Activated B cell treated with CpG ODN at 0.5 μM for 24 hours (primary cell): ENCODE measurements at regions of chr9 and their contacts with region 1.

Region 1: DNA sequence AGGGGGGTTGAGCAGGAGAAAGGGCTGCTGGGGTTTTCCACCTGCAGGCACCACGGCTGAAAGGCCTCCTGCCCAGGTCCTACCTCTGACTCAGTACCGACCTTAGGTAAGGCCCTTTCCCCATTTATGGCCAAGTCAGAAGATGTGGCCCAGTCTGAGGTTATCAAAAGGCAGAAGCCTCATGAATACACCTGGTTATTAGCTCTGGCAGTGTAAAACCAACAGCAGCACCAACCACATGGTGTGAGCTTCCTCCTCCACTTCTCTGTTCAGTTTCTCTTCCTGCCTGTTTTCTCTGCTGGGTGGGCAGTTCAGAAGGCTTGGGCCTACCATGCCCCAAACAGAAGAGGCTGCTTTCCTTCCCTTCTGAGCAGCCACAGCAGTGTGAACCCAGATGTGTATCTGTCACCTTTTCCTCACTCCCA is 86.9 kb downstream of the UGCG start:
- DNase-seq: peak; percentile 44
- ATAC-seq: peak; percentile 86
- H3K4me3 Mint-ChIP-seq: peak overlapping the region; percentile 55
- H3K27ac Mint-ChIP-seq: peak overlapping the region; percentile 97
- H3K4me1 Mint-ChIP-seq: peaks cover 66% of the 10 kb centered on the region
- H3K27me3 Mint-ChIP-seq: no peaks in the 10 kb centered on the region
- CTCF ChIP-seq: no peak

Region 2: GRCh38 chr9:111937781-111938426 is 45.6 kb before region 1 on chr9:
- CTCF ChIA-PET with region 1: no interaction called
- POLR2A ChIA-PET with region 1: interaction called, 9 read pairs
- intact Hi-C with region 1: loop called (anchors 1 kb)
- DNase-seq: no peak
- ATAC-seq: peak; percentile 84
- H3K4me3 Mint-ChIP-seq: peak overlapping the region; percentile 69
- H3K27ac Mint-ChIP-seq: peak overlapping the region; percentile 86
- H3K4me1 Mint-ChIP-seq: peaks cover 43% of the 10 kb centered on the region
- H3K27me3 Mint-ChIP-seq: no peaks in the 10 kb centered on the region
- CTCF ChIP-seq: no peak

Region 3: GRCh38 chr9:111965566-111966019 is 17.9 kb before region 1 on chr9:
- CTCF ChIA-PET with region 1: interaction called, 4 read pairs
- POLR2A ChIA-PET with region 1: interaction called, 8 read pairs
- intact Hi-C with region 1: loop called (anchors 2 kb)
- DNase-seq: no peak
- ATAC-seq: peak; percentile 64
- H3K4me3 Mint-ChIP-seq: peak overlapping the region; percentile 12
- H3K27ac Mint-ChIP-seq: peak overlapping the region; percentile 75
- H3K4me1 Mint-ChIP-seq: peaks cover 34% of the 10 kb centered on the region
- H3K27me3 Mint-ChIP-seq: no peaks in the 10 kb centered on the region
- CTCF ChIP-seq: no peak

Region 4: GRCh38 chr9:112012026-112012902 is 28.8 kb after region 1 on chr9:
- CTCF ChIA-PET with region 1: interaction called, 5 read pairs
- POLR2A ChIA-PET with region 1: interaction called, 82 read pairs
- intact Hi-C with region 1: loop called (anchors 1 kb)
- DNase-seq: no peak
- ATAC-seq: peak; percentile 85
- H3K4me3 Mint-ChIP-seq: peak overlapping the region; percentile 47
- H3K27ac Mint-ChIP-seq: peak overlapping the region; percentile 93
- H3K4me1 Mint-ChIP-seq: peaks cover 84% of the 10 kb centered on the region
- H3K27me3 Mint-ChIP-seq: no peaks in the 10 kb centered on the region
- CTCF ChIP-seq: no peak

Region 5: DNA sequence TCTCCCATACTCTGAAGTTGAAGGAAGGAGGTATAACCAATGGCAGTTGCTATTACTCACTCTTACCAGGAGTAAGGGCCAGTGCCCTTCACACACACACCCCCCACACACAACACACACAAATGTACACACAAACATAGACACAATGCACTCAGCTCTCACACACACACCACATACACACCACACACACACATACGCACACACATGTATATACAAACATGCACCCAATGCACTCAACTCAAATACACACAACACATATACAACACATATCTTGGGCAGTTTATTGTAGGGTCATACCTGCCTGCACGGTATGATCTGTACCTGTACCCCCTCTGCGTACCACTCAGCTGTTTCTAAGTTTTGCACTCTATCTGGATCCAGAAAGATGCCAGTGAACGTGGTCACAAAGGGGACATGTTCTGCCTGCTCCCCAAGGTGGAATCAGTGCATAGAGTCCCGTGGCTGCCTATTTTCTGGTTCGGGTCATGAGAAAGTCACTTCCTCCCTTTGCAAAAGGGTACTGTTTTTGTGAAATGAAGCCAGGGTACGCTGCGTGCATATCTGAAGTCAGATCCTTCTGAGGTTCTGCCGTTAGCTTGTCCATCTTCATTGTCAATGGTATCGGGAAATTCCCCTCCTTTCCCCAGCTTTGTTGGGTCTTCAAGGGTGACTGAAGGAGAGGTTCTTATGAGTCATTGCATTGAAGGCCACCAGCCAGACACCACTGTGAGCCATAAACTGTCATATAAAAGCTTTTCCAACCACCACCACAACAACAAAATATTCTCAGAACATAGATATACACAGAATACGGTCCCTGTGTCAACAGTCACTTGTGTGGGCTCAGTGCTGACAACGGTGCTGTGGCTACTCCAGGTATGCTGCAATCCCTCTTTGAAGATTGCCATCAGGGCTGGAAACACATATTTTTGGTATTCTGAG is 45.1 kb after region 1 on chr9:
- CTCF ChIA-PET with region 1: interaction called, 6 read pairs
- POLR2A ChIA-PET with region 1: interaction called, 120 read pairs
- intact Hi-C with region 1: loop called (anchors 1 kb)
- DNase-seq: peak; percentile 41
- ATAC-seq: peak; percentile 79
- H3K4me3 Mint-ChIP-seq: peak overlapping the region; percentile 82
- H3K27ac Mint-ChIP-seq: peak overlapping the region; percentile 91
- H3K4me1 Mint-ChIP-seq: peaks cover 77% of the 10 kb centered on the region
- H3K27me3 Mint-ChIP-seq: no peaks in the 10 kb centered on the region
- CTCF ChIP-seq: no peak